Calu3 (cell line): ENCODE measurements at regions of chr22 and their contacts with region 1.

Region 1: DNA sequence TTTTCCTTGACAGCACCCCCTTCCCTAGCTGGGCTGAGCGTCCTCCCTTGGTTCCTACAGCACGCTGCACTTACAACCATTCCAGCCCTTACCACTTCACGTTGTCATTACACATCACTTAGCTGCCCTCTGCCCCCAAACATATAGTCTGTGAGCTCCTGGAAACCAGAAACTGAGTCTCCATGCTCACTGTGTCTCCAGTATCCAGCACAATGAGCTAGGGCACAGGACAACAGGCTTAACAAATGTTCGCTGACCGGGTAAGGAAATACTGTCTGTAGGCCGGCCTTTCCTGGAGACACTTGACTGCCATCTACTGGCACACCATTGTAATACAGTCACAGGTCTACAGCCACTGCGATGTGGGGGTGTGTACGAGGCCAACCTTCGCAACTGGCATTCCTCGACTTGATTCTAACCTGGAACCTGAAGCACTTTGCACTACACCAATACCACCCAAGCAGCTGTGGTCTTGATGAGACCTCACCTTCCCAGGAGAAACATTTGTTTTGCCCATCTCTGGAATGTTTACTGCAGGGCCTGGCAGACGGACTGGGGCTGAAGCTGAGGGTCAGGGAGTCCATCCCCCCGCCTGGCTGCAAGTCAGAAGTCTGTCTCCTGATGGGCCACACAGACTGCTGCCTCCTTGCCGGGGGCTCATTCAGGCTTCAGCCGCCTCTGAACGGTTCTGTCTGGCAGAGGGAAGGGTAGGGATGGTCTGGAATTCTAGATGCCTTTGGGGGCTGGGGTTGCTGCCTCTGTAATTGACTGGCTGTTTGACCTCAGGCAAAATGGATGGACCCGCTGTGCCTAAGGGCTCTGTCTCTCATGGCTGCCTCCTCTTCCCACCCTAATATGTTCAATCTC is 72.0 kb downstream of the SYN3 start:
- DNase-seq: peak; percentile 79
- H3K4me3 Mint-ChIP-seq: no peak overlapping the region
- H3K27ac Mint-ChIP-seq: no peak overlapping the region
- H3K4me1 Mint-ChIP-seq: peaks cover 6% of the 10 kb centered on the region
- H3K27me3 Mint-ChIP-seq: peaks cover 14% of the 10 kb centered on the region
- CTCF ChIP-seq: peak; percentile 70

Region 2: GRCh38 chr22:32823024-32823730 is 163.0 kb before region 1 on chr22:
- CTCF ChIA-PET with region 1: no interaction called
- intact Hi-C with region 1: loop called (anchors 10 kb)
- DNase-seq: peak; percentile 69
- H3K4me3 Mint-ChIP-seq: no peak overlapping the region
- H3K27ac Mint-ChIP-seq: no peak overlapping the region
- H3K4me1 Mint-ChIP-seq: no peaks in the 10 kb centered on the region
- H3K27me3 Mint-ChIP-seq: no peaks in the 10 kb centered on the region
- CTCF ChIP-seq: peak; percentile 48

Region 3: GRCh38 chr22:32926600-32926999 is 59.5 kb before region 1 on chr22:
- CTCF ChIA-PET with region 1: interaction called, 6 read pairs
- intact Hi-C with region 1: loop called (anchors 1 kb)
- DNase-seq: peak; percentile 34
- H3K4me3 Mint-ChIP-seq: no peak overlapping the region
- H3K27ac Mint-ChIP-seq: no peak overlapping the region
- H3K4me1 Mint-ChIP-seq: no peaks in the 10 kb centered on the region
- H3K27me3 Mint-ChIP-seq: peaks cover 34% of the 10 kb centered on the region
- CTCF ChIP-seq: peak; percentile 53

Region 4: GRCh38 chr22:33255791-33256190 is 269.7 kb after region 1 on chr22:
- CTCF ChIA-PET with region 1: no interaction called
- intact Hi-C with region 1: no loop called
- DNase-seq: no peak
- H3K4me3 Mint-ChIP-seq: no peak overlapping the region
- H3K27ac Mint-ChIP-seq: no peak overlapping the region
- H3K4me1 Mint-ChIP-seq: no peaks in the 10 kb centered on the region
- H3K27me3 Mint-ChIP-seq: peaks cover 39% of the 10 kb centered on the region
- CTCF ChIP-seq: no peak